Heart left ventricle (tissue), 16 donors: ENCODE measurements at regions of chr1 and their contacts with region 1.

Region 1: GRCh38 chr1:167936068-167936929 is at the start of gene DCAF6:
- DNase-seq: peak; percentile 98
- ATAC-seq: peak; percentile 91 to 96 (median 94)
- H3K4me3 ChIP-seq: peak within 1 kb of the TSS; percentile 72 to 97 (median 82)
- H3K27ac ChIP-seq: peak within 1 kb of the TSS; percentile 93 to 99 (median 96)
- H3K4me1 ChIP-seq: peaks cover 0 to 58% (median 38%) of the 10 kb centered on the region in 12 donors
- H3K27me3 ChIP-seq: no peaks in the 10 kb centered on the region
- CTCF ChIP-seq: no peak
- POLR2A ChIP-seq: peak; percentile 76 to 95
- total RNA-seq, gene DCAF6: 145 to 245 (median 180) TPM

Region 2: DNA sequence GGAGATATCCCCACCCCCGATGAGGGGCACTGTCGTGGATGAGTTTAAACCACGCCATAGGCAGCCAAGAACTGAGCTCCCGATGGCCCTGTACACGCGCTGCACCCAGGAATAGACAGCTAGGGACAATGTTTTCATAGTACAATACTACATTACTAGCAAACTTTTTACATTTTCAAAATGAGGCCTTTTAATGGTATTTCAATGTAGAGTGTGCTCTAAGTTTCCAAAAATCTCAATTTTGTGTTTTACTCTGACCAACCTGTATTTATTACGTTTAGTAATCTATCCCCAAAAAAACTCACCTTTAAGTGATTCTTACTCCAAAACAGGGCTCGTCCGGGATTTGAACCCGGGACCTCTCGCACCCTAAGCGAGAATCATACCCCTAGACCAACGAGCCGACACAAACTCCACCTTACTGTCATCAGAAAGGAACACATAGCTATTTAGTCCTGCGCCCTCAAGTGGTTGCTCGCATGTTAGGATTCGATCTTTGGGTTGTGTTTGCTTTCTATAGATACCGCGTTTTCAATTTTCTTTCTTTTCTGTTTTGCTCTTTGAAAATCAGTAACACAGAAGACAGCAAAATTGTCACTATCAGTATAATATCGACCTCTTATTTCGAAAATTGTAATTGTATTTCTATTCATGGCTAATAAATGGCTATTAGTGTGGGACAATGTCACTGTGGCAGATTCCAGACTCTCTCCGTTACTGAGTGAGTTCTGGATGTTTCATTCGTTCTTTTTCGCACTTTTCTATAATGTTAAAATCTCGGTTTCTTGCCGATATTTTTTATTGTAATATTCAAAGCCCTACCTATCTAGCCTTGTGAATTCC is 220.9 kb before region 1 on chr1:
- intact Hi-C with region 1: loop called in 9 of 10 experiments (anchors 5 to 10 kb)
- DNase-seq: peak; percentile 69 to 86 (median 85)
- ATAC-seq: peak; percentile 37 to 72 (median 60)
- H3K4me3 ChIP-seq: peak overlapping the region; percentile 39 to 86 (median 76)
- H3K27ac ChIP-seq: peak overlapping the region in 11 of 12 donors; percentile 84 to 94 (median 88)
- H3K4me1 ChIP-seq: peaks cover 0 to 18% (median 4%) of the 10 kb centered on the region in 12 donors
- H3K27me3 ChIP-seq: no peaks in the 10 kb centered on the region
- CTCF ChIP-seq: peak; percentile 63 to 95 (median 77)
- POLR2A ChIP-seq: no peak

Region 3: GRCh38 chr1:167803358-167804207 is 132.7 kb before region 1 on chr1:
- intact Hi-C with region 1: loop called in 2 of 10 experiments (anchors 5 kb)
- DNase-seq: peak; percentile 89 to 95 (median 93)
- ATAC-seq: peak; percentile 88 to 98 (median 96)
- H3K4me3 ChIP-seq: peak overlapping the region in 2 of 12 donors; percentile 1 to 6
- H3K27ac ChIP-seq: peak overlapping the region in 1 of 12 donors; percentile 28
- H3K4me1 ChIP-seq: peaks cover 0 to 25% (median 2%) of the 10 kb centered on the region in 12 donors
- H3K27me3 ChIP-seq: no peaks in the 10 kb centered on the region
- CTCF ChIP-seq: peak; percentile 95 to 100 (median 97)
- POLR2A ChIP-seq: no peak

Region 4: DNA sequence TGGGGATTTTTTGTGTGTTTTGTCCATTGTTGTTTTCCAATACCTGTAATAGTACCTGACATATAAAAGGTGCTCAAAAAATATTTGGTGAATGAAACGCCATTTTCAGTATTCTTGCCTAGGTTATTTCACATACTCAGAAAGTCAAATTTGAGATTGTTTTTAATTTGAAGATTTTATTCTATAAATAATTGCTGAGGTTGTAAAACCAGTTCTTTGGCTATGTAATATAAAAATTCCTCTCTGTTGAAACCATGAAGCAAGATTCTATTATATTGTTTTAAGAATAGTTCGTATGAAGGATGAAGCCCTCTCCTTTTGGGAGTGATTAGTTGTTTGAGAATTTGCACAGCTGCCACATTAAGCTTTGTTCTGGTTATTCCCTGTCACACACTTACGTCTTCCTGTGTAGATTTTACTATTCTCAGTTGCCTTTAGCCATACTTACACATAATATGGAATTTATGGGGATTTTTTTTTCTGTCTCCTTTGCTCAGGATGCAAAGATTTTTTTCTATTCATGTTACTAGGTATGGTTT is 60.8 kb after region 1 on chr1:
- intact Hi-C with region 1: loop called in 1 of 10 experiments (anchors 5 kb)
- DNase-seq: no peak
- ATAC-seq: no peak
- H3K4me3 ChIP-seq: no peak overlapping the region
- H3K27ac ChIP-seq: no peak overlapping the region
- H3K4me1 ChIP-seq: peaks cover 0 to 24% (median 13%) of the 10 kb centered on the region in 12 donors
- H3K27me3 ChIP-seq: no peaks in the 10 kb centered on the region
- CTCF ChIP-seq: no peak
- POLR2A ChIP-seq: no peak

Region 5: DNA sequence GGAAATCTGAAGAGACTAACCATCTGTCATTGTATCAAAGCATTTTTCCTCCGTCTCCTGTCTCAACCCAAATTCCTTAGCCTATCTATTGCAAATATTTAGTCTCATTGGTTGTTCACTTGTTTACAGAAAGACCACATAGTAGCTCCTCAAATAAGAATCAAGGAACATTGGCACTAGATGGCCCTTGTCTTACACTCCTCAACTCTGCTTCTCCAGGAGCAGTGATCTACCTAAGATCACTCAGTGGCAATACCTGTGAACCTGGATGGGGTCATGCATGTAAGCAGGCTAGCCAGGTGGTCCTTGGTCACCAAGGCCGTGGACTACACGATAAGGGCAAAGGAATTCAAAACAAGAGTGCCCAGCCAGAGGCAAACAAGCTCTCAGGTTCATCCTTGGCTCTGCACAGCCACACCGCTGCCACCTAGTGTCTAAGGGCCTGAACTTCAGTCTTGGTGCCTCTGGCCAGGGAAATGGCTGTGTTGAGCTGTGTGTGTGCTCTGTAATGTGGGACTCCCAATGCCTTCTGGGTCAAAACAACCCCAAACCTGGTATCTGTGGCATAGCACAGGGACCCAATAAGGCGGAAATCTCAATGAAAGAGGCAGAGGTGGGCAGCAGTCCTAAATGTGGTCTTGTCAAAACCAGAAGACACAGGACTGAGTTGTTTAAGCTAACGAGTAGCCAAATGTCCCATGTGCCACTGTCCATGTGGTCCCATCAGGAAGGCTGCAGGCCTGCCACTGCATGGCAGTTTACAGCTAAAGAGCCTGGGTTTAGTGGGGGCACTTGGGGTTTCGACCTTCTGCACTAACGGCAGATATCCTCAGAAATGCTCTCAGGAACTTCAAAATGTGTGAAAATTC is 145.9 kb after region 1 on chr1:
- intact Hi-C with region 1: loop called in 2 of 10 experiments (anchors 10 kb)
- DNase-seq: peak; percentile 59 to 83 (median 64)
- ATAC-seq: peak; percentile 39 to 81 (median 68)
- H3K4me3 ChIP-seq: no peak overlapping the region
- H3K27ac ChIP-seq: peak overlapping the region in 5 of 12 donors; percentile 6 to 62 (median 48)
- H3K4me1 ChIP-seq: peaks cover 0 to 55% (median 29%) of the 10 kb centered on the region in 12 donors
- H3K27me3 ChIP-seq: no peaks in the 10 kb centered on the region
- CTCF ChIP-seq: peak; percentile 74 to 93 (median 84)
- POLR2A ChIP-seq: no peak

Region 6: GRCh38 chr1:168234846-168235547 is 298.7 kb after region 1 on chr1:
- intact Hi-C with region 1: no loop called
- DNase-seq: no peak
- ATAC-seq: peak; percentile 46 to 67 (median 63)
- H3K4me3 ChIP-seq: no peak overlapping the region
- H3K27ac ChIP-seq: no peak overlapping the region
- H3K4me1 ChIP-seq: peaks cover 0 to 29% (median 9%) of the 10 kb centered on the region in 12 donors
- H3K27me3 ChIP-seq: no peaks in the 10 kb centered on the region
- CTCF ChIP-seq: peak; percentile 31 to 59 (median 46)
- POLR2A ChIP-seq: no peak